PC-3 (cell line): ENCODE measurements at regions of chr12 and their contacts with region 1.

Region 1: DNA sequence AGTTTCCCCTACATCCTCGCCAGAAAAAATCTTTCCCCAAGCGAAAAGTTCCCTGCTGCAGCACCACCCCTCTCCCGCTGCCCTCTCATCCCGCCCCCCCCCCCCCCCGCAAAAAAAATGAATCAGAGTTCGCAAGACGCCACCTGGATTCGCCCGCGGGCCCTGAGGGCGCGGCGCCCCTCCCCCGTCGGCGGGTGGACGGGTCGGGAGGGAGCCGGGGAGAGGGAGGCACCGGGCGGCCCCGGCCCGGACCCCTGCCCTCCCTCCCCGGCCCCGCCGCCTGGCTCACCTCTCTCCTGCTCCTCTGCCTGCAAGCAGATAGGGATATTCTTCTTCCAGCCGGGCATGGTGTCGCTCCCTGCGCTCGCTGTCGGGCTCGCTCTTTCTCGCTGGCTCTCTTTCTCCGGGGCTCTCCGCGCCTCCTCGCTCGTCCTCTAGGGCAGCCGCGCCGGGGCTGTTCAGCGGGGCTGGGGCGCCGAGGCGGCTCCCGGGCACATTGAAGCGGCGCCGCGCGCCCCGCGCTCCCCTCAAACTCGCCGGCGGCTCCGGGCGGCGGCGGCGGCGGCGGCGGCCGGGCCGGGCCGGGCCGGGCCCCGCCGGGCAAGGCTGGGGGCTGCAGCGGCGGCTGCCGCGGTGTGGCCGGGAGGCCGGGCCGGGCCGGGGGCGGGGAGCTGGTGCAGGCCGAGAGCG is 200.3 kb upstream of the CAND1 start:
- DNase-seq: peak; percentile 82
- ATAC-seq: peak; percentile 59
- H3K4me3 ChIP-seq: peak overlapping the region; percentile 79
- H3K27ac ChIP-seq: peak overlapping the region; percentile 56
- H3K4me1 ChIP-seq: peaks cover 23% of the 10 kb centered on the region
- H3K27me3 ChIP-seq: no peaks in the 10 kb centered on the region
- CTCF ChIP-seq: no peak

Region 2: DNA sequence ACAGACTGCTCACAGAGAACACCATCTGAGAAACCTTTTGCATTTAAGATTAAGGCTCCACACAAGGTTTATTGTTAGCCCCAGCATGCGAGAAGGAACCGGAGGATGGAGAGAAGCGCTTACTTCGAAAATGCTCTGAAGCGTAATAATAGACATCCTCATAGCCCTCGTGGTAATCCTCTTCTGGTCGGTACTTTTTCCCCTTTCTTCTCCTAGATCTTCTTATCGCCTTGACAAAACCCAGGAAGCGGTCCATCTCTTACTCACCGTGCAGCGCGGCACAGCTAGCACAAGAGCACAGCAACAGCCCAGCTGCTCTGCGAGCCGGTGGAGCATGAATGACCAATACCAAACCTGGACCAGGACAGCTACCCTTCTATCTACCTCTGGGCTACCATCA is 265.0 kb before region 1 on chr12:
- CTCF ChIA-PET with region 1: no interaction called
- POLR2A ChIA-PET with region 1: no interaction called
- intact Hi-C with region 1: no loop called
- DNase-seq: no peak
- ATAC-seq: no peak
- H3K4me3 ChIP-seq: no peak overlapping the region
- H3K27ac ChIP-seq: no peak overlapping the region
- H3K4me1 ChIP-seq: no peaks in the 10 kb centered on the region
- H3K27me3 ChIP-seq: 0 out of 2 replicates have a peak, but pooled peaks cover 5% of the 10 kb centered on the region
- CTCF ChIP-seq: no peak

Region 3: DNA sequence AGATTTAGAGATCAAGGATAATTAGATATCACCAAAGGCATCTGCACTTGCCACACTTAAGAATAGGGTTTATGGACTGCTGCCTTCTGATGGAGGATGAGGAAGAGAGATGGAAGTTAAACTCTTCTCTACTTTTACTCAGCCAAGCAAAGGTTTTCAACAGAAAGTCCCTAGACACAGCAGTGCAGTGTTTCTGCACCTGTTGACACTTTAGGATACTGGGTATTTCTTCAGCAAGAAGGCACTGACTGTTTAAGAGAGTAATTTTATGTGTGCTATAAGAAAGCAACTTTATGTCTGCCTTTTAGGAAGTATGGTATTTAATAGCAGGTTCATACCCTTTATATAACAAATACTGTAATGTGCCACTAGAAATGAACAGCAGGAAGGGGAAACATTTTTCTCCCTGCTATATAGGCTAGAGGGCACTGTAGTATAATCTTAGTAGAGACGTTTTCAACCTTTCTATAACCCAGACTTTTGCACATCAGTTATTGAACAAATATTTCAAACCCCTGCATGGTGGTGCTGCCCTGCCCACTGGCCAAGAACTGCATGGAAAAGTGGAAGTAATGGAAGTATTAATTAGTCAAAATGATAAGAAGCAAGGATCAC is 165.0 kb before region 1 on chr12:
- CTCF ChIA-PET with region 1: no interaction called
- POLR2A ChIA-PET with region 1: no interaction called
- intact Hi-C with region 1: loop called (anchors 1 kb)
- DNase-seq: peak; percentile 42
- ATAC-seq: peak; percentile 74
- H3K4me3 ChIP-seq: no peak overlapping the region
- H3K27ac ChIP-seq: no peak overlapping the region
- H3K4me1 ChIP-seq: no peaks in the 10 kb centered on the region
- H3K27me3 ChIP-seq: no peaks in the 10 kb centered on the region
- CTCF ChIP-seq: peak; percentile 48

Region 4: GRCh38 chr12:67002720-67003119 is 66.2 kb before region 1 on chr12:
- CTCF ChIA-PET with region 1: no interaction called
- POLR2A ChIA-PET with region 1: no interaction called
- intact Hi-C with region 1: no loop called
- DNase-seq: peak; percentile 52
- ATAC-seq: no peak
- H3K4me3 ChIP-seq: no peak overlapping the region
- H3K27ac ChIP-seq: no peak overlapping the region
- H3K4me1 ChIP-seq: 0 out of 2 replicates have a peak, but pooled peaks cover 4% of the 10 kb centered on the region
- H3K27me3 ChIP-seq: no peaks in the 10 kb centered on the region
- CTCF ChIP-seq: no peak

Region 5: DNA sequence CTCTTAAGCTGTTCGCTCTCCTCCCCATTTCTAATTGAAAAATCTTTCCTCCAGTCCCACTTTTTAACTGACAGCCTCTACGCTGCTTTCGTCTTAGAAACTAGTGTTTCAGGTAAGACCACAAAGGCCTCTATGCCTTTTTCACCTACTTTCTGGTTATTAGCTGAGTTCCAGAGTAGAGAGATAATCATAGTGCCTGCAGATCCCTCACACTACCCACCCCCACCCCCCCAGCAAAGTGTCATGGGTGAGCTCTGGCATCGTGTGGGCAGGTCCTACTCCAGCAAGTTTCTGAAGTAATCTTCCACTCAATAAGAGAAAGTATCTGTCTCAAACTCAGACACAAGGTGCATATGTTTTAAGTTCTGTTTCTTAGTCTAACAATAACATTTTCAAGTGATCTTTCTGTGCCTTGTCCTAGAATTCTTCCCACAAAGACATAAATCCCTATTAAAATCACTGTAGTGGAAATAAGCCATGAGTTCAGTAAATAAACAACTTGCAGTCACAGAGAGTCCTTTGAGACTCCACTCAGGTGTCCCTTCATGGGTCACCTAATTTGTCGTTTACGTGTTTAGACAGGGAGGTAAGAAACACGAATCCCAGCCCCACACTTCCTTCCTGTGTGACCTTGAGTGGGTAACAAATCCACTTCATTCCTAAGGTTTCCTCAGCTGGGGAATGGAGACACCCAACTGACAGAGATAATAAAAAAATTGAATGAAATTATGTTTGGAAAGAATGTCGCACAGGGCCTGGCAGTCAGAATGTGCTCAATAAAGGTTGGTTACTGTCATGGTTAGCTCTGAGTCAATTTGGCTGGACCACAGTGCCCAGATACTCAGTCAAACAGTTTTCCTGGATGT is 28.7 kb before region 1 on chr12:
- CTCF ChIA-PET with region 1: interaction called, 3 read pairs
- POLR2A ChIA-PET with region 1: no interaction called
- intact Hi-C with region 1: loop called (anchors 1 kb)
- DNase-seq: peak; percentile 88
- ATAC-seq: peak; percentile 86
- H3K4me3 ChIP-seq: peak overlapping the region; percentile 41
- H3K27ac ChIP-seq: peak overlapping the region; percentile 91
- H3K4me1 ChIP-seq: peaks cover 52% of the 10 kb centered on the region
- H3K27me3 ChIP-seq: no peaks in the 10 kb centered on the region
- CTCF ChIP-seq: no peak

Region 6: DNA sequence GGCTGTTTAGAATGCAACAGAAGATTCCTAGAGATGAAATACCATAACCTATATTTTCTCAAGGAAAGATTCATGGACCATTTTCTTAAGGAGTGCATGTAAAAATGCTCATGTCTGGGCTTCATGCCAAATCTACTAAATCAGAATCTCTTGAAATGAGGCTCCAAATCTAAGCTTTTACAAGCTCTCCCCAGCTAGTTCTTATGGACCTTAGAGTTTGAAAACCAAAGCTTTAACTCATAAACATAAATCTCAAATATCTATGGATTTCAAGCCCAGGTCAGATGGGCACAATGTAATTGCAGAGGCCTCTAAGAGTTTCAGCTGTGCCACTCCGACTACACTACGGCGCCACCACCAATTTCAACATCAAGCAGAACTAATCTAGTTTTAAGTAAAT is 83.0 kb after region 1 on chr12:
- CTCF ChIA-PET with region 1: no interaction called
- POLR2A ChIA-PET with region 1: no interaction called
- intact Hi-C with region 1: no loop called
- DNase-seq: no peak
- ATAC-seq: no peak
- H3K4me3 ChIP-seq: no peak overlapping the region
- H3K27ac ChIP-seq: no peak overlapping the region
- H3K4me1 ChIP-seq: no peaks in the 10 kb centered on the region
- H3K27me3 ChIP-seq: peaks cover 5% of the 10 kb centered on the region
- CTCF ChIP-seq: no peak

Region 7: GRCh38 chr12:67222302-67222701 is 153.4 kb after region 1 on chr12:
- CTCF ChIA-PET with region 1: interaction called, 5 read pairs
- POLR2A ChIA-PET with region 1: no interaction called
- intact Hi-C with region 1: loop called (anchors 2 kb)
- DNase-seq: peak; percentile 63
- ATAC-seq: peak; percentile 51; the same call in 1 of the 2 replicates
- H3K4me3 ChIP-seq: no peak overlapping the region
- H3K27ac ChIP-seq: no peak overlapping the region
- H3K4me1 ChIP-seq: no peaks in the 10 kb centered on the region
- H3K27me3 ChIP-seq: peaks cover 16% of the 10 kb centered on the region
- CTCF ChIP-seq: peak; percentile 63

Region 8: DNA sequence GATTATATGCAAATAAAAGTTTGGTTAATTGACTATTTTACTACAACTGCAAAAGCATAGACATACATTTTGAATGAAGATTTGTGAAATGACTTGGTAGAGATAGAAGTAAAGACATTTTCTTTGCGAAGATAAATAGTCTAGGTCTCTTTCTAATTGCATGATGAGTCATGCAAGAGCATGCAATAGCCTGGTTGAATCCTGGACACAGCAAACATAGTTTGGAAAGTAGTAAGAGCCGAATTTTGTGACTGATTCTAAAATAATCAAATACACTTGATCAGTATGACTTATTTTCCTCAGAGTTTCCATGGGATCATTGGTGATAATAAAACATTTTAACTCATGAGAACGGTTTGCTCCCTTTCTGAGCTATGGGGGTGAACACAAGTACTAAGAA is 172.6 kb after region 1 on chr12:
- CTCF ChIA-PET with region 1: no interaction called
- POLR2A ChIA-PET with region 1: no interaction called
- intact Hi-C with region 1: no loop called
- DNase-seq: peak; percentile 45
- ATAC-seq: peak; percentile 35; the same call in 1 of the 2 replicates
- H3K4me3 ChIP-seq: no peak overlapping the region
- H3K27ac ChIP-seq: no peak overlapping the region
- H3K4me1 ChIP-seq: peaks cover 6% of the 10 kb centered on the region; the same call in 1 of the 2 replicates
- H3K27me3 ChIP-seq: peaks cover 8% of the 10 kb centered on the region; the same call in 1 of the 2 replicates
- CTCF ChIP-seq: no peak